ENCODE measurements at regions of chr3 and their contacts with region 1.

Region 1: GRCh38 chr3:39727415-39727814 is 82.0 kb upstream of the MYRIP start:
- DNase-seq: no peak
- H3K4me3 ChIP-seq: no peak overlapping the region
- H3K27ac ChIP-seq: no peak overlapping the region
- H3K4me1 ChIP-seq: no peaks in the 10 kb centered on the region
- H3K27me3 ChIP-seq: no peaks in the 10 kb centered on the region
- CTCF ChIP-seq: no peak

Region 2: DNA sequence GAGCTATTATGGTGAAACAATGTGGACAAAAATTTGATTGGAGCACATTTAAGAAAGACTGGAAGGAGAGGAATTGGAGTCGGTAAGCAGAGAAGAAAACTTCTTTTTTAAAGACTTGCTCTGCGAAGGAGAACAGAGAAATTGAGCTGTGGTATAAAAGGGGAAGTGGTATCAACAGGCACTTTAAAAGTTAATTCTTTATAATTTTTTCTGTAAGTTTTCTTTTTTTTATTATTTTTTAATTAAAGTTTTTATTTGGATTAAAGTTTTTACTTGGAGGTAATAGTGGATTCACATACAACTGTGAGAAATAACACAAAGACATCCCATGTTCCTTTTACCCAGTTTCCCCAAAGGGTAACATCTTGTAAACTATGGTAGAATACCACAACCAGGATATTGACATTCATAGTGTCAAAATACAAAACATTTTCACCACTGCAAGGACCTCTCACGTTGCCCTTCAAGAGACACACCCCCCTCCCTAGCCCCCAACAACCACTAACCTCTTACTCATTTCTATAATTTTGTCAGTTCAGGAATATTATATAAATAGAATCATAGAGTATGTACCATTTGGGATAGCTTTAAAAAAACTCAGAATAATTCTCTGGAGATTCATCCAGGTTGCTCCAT is 501.2 kb before region 1 on chr3:
- intact Hi-C with region 1: no loop called
- DNase-seq: no peak
- H3K4me3 ChIP-seq: no peak overlapping the region
- H3K27ac ChIP-seq: no peak overlapping the region
- H3K4me1 ChIP-seq: no peaks in the 10 kb centered on the region
- H3K27me3 ChIP-seq: no peaks in the 10 kb centered on the region
- CTCF ChIP-seq: no peak

Region 3: GRCh38 chr3:39843440-39843839 is 116.0 kb after region 1 on chr3:
- intact Hi-C with region 1: no loop called
- DNase-seq: no peak
- H3K4me3 ChIP-seq: no peak overlapping the region
- H3K27ac ChIP-seq: no peak overlapping the region
- H3K4me1 ChIP-seq: peaks cover 0 to 9% (median 0%) of the 10 kb centered on the region in 4 donors
- H3K27me3 ChIP-seq: no peaks in the 10 kb centered on the region
- CTCF ChIP-seq: no peak

Region 4: DNA sequence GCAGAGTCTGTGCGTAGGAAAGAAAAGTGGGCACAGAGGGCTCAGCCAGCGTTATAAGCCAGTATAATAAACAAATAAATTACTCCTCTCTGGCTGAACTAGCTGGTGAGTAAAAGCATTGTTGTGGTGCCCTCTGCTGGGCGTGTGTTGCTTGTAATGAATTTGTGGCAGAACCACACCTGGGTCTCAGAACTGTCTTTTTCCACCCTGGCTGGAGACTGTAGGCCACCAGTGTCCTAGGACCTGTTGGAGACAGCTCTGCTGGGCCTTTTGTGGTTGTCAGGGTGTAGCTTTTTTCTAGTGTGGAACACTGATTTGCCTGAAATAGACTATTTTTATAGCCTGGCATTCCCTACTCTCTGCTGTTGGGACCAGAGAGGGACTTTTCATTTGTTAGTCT is 451.6 kb after region 1 on chr3:
- intact Hi-C with region 1: loop called (anchors 5 kb)
- DNase-seq: peak in 1 of 2 donors; percentile 73
- H3K4me3 ChIP-seq: no peak overlapping the region
- H3K27ac ChIP-seq: peak overlapping the region in 1 of 2 donors; percentile 42
- H3K4me1 ChIP-seq: peaks cover 7 to 13% (median 9%) of the 10 kb centered on the region in 4 donors
- H3K27me3 ChIP-seq: no peaks in the 10 kb centered on the region
- CTCF ChIP-seq: peak; percentile 69 to 82

Measured in tibial artery (tissue), 4 donors.